ENCODE measurements at regions of chr12 and their contacts with region 1.

Region 1: DNA sequence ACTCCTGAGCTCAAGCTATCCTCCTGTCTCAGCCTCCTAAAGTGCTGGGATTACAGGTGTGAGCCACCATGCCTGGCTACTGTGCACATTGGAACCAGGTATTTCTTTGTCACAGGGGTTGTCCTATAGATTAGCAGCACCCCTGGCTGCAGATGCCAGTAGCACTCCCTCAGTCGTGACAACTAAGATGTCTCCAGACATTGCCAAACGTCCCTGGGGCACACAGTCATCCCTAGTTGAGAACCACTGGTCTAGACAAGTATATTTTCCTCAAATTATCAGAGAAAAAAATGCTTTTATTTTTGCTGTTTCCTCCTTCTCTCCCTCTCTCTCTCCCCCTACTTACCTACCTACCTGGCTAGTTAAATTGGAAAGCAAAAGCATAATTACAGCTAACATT is 17.9 kb upstream of the P2RX7 start:
- DNase-seq: no peak
- H3K4me3 ChIP-seq: no peak overlapping the region
- H3K27ac ChIP-seq: no peak overlapping the region
- H3K4me1 ChIP-seq: no peaks in the 10 kb centered on the region
- H3K27me3 ChIP-seq: no peaks in the 10 kb centered on the region
- CTCF ChIP-seq: no peak
- POLR2A ChIP-seq: no peak

Region 2: DNA sequence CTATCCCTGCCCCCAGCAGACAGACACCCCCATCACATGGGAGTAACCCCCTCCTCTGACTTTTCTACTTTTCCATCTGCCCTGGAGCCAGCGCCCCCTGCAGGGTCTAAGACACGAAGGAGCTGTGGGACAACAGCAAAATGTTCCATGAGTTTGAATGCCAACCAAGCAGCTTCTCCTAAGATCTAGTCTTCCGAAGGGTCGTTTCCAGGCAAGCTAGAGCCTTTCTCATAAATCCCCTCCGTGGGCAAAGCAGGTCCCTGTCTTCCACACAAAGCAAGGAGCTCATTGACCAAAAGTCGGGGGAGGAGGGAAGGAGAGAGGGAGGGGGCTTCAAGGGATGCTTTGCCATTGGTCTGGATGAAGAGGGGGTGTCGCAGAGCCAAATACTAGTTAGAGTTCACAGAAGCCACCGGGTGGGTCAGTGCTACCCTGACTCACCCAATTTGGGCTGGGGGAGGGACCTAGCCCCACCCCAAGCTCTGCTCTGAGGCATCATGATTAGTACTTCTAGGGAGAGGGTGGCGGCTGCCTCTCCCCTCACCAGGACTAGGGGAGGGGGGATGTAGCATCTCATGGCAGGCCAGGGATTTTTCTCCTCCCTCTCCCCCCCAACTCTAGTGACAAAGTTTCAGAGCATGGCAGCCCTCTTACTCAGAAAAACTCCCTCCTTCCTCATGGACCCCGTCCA is 747.4 kb before region 1 on chr12:
- intact Hi-C with region 1: loop called (anchors 5 kb)
- DNase-seq: no peak
- H3K4me3 ChIP-seq: peak overlapping the region in 3 of 4 donors; percentile 36 to 63 (median 51)
- H3K27ac ChIP-seq: no peak overlapping the region
- H3K4me1 ChIP-seq: peaks cover 8 to 29% (median 20%) of the 10 kb centered on the region in 3 donors
- H3K27me3 ChIP-seq: peaks cover 13 to 73% (median 19%) of the 10 kb centered on the region in 4 donors
- CTCF ChIP-seq: peak in 2 of 6 experiments; percentile 3 to 10
- POLR2A ChIP-seq: no peak

Region 3: DNA sequence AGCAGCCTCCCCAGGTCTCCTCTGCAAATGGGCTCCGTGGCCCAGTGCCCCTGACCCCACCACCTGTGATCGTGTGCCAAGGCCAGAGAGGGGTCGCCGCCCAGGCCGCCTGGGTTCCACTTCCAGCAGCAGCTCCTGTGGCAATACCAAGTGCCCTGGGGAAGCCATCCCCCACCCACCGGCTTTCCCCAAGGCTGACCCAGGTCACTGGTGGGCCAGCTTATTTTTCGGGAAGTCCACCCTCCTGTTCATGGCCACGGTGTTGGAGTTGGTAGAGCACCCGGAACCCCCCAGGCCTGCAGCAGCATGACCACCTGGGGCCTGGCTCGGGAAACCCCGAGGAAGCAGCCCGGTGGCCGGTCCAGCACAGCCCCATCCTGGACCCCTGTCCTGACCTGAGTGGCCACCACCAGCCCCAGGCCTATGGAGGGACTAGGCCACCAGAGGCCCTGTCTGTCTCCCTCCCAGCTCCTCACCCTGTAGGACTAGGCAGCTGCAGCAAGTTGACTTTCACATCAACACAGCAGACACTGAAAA is 35.0 kb before region 1 on chr12:
- intact Hi-C with region 1: no loop called
- DNase-seq: no peak
- H3K4me3 ChIP-seq: no peak overlapping the region
- H3K27ac ChIP-seq: no peak overlapping the region
- H3K4me1 ChIP-seq: no peaks in the 10 kb centered on the region
- H3K27me3 ChIP-seq: no peaks in the 10 kb centered on the region
- CTCF ChIP-seq: no peak
- POLR2A ChIP-seq: no peak

Measured in esophagus squamous epithelium (tissue), 5 donors.